ENCODE measurements at regions of chr1 and their contacts with region 1.

Region 1: DNA sequence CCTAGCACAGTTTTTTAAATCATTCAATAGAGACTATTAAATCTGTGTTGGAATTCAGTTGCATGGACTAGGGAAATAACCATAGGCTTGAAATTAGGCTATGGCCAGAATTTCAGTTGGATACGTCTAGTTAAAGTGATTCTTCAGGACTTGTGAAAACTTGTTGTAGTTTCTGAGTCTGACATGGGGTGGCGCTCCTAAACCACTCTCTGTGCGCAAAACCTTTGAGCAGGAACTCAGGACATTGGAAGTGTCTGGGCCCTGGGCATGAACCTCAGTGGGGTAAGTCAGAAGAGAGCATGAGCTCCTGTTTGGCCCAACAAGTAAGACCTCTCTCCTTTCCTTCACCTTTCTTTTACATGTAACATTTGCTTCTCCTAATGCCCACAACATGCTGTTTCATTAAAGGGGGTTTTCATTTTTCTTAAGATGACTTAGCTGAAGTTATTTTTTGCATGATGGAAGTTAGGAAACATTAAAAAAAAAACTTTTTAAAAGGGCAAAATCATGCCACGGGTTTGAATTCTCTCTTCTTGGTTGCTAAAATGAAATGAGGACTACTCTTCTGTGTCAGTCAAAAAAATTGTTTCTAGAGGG is 17.1 kb upstream of the CCDC190 start:
- DNase-seq: peak in 1 of 2 donors; percentile 38
- ATAC-seq: peak; percentile 59

Region 2: DNA sequence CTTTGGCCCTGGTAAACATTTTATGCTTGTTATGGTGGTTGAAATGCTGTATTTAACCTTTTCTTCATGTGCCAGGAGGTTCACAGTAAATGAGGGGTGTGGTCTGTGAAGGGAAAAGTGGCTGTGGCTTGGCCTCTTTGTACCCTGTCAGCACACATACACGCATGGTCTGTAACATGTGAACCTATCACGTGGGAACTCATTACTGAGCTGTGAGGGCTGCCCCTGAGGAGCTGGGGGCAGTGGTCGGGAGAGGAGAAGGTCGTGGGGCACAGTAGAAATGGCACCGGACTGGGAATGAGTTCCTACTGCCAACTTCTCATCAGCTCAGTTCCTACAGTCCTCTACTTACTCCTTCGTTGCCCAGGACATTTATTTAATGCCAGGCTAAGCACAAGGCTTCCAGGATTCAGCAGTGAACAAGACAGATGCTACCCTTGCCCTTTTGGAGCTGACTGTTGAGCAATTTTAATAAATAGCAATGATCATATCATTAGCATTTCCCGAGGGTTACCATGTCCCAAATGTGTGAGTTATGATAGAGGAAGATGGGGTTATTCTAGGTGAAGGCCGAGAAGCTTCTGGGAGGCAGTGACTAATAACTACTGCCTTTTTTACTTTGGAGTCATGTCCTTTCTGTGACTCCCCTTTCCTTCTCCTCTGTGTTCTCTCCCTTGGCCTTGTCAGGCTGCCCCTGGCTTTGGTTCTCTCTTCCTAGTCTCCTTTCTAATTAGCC is 207.0 kb before region 1 on chr1:
- intact Hi-C with region 1: no loop called
- DNase-seq: no peak
- ATAC-seq: no peak

Region 3: DNA sequence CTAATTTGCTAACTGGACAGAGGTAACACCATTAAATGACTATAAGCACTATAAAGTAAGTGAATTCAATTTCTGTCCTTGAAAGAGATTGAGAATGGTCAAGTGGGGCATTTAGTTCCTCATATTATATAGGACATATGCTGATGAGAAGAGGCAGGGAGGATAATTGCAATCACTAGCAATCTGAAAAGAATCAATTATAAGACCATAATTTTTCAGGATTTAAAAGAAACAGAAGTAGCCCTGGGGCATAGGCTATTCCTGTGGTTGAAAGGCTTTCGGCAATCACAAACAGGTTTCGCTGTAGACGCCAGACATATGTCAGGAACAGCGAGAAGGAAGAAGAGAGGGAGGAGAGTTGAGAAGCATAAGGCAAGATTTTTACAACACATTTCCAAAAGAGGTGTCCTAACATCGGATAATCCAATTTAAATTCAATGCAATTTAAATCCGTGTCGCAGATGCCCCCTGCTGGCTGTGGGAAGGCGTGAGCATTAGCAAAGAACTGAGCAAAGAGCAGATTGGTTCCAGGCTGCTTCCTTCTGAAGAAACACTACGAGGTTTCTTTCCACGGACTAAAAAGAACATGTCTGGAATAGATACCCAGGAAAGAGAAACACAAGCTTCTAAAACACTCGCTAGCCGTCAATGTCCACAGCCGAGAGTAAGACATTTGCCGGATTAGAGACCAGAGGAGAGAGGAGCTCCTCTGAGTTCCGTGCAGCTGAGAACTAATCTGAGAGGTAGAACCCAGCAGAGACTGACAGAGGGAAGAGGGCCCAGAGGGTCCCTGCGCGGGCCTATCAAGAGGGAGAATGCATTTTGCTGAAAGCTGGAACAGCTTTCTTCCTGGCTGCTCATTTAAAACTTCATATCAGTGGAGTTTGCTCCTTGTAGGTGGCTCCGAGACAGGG is 296.7 kb after region 1 on chr1:
- intact Hi-C with region 1: loop called in 1 of 2 experiments (anchors 10 kb)
- DNase-seq: peak; percentile 48 to 70
- ATAC-seq: peak; percentile 39

Region 4: DNA sequence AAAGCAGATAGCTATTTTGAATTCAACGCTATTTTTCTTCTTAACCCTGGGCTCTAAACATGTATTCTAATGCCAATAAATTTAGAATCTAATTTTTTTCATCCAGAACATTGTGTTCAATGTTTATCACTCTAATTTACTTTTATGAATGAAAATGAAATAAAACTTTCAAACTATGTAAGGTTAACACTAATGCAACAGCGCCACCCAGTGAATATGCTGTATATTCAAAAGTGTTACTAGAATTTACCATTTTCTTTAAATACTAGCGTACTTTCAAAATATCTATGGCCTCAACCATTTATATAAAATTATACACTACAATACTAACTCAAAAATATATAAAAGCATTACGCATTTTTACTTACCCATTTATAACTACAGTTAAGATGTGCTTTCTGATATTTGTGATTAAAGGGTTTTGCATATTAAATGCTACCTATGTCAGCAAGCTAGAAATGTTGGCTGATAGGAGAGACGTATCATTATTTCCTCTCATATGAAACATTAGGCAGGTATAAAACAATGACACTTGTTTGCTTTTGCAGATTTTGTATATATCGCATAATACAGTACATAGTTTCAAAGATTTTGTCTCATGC is 437.8 kb after region 1 on chr1:
- intact Hi-C with region 1: loop called in 1 of 2 experiments (anchors 5 kb)
- DNase-seq: peak; percentile 27 to 29
- ATAC-seq: no peak

Measured in left colon (tissue), 2 donors.